PC-3 (cell line): ENCODE measurements at regions of chr1 and their contacts with region 1.

Region 1: DNA sequence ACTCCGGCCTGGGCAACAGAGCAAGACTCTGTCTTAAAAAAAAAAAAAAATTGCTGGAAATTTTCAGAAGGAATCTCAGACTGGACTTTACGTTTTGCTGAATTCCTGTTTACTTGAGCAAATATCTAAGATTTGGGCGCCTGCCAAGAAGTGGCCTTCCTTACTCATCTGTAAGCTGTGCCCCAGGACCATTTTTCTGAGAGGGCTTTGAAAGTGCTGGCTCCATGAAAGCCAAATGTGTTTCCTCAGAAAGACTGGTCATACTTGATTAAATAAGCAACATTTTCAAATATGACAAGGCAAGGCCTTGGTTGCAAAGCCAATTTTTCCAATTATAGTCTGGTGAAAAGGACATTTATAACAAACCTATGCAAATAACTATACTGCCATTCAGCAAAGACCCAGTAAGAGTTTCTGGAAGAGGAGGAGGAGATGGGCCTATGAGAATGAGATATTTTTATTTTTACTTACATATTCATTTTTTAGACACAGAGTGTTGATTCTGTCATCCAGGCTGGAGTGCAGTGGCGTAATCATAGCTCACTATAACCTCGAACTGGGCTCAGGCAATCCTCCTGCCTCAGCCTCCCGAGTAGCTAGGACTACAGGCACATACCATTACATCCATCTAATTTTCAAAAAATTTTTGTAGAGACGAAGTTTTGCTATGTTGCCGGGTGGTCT is 56.3 kb upstream of the HTR1D start:
- DNase-seq: peak; percentile 94
- ATAC-seq: peak; percentile 80
- H3K4me3 ChIP-seq: no peak overlapping the region
- H3K27ac ChIP-seq: peak overlapping the region; percentile 48
- H3K4me1 ChIP-seq: peaks cover 32% of the 10 kb centered on the region
- H3K27me3 ChIP-seq: no peaks in the 10 kb centered on the region
- CTCF ChIP-seq: no peak

Region 2: DNA sequence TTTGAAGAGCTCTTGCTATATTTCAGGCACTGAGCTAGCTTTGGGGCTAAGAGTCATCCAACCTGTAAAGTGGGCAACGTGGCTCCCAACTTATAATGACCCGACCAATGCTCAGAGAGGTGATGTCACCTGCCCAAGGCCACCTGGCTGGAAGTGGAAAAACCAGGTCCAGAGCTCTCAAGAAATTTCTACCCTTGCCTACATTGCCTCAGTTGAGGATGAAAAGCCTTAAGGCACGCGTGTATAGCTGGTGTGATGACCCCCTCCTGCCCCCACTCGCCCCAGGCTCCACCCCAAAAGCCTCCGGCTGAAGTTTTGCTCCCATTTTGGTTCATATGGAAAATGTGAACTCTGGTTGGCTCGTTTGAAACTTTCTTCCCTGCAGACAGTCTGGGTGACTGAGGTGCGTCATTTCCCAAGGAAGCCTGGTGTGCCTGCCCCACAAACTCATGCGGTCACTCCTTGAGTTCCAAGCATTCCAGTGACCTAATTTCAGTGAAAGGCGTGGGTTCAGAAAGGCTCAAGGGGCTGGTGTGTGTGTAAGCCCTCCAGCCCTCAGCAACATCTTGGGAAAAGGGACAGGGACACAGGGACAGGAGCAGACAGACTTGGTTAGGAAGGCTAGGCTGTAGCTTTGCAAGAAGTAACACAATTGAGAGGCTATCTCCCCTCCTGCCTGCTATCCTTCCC is 76.8 kb before region 1 on chr1:
- CTCF ChIA-PET with region 1: no interaction called
- POLR2A ChIA-PET with region 1: no interaction called
- intact Hi-C with region 1: loop called (anchors 5 kb)
- DNase-seq: peak; percentile 96
- ATAC-seq: peak; percentile 85
- H3K4me3 ChIP-seq: no peak overlapping the region
- H3K27ac ChIP-seq: peak overlapping the region; percentile 96
- H3K4me1 ChIP-seq: peaks cover 60% of the 10 kb centered on the region
- H3K27me3 ChIP-seq: no peaks in the 10 kb centered on the region
- CTCF ChIP-seq: no peak

Region 3: DNA sequence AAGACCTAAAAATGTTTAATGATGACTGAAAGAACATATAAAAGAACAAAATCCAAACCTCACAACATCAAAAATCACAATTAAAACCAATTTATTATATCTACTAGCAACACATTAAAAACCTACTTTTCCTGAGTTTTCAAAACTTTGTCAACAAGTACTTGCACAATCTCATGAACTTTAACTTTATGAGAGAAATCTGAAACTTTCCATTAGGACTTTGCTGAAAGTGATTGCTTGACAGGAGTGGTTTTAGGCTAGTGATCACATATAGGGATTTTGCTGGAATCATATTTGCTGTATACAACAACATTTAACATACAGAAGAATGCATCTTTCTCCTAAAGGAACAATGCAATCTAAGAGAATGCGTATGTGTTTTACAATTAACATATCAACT is 57.3 kb after region 1 on chr1:
- CTCF ChIA-PET with region 1: no interaction called
- POLR2A ChIA-PET with region 1: interaction called, 13 read pairs
- intact Hi-C with region 1: no loop called
- DNase-seq: no peak
- ATAC-seq: no peak
- H3K4me3 ChIP-seq: no peak overlapping the region
- H3K27ac ChIP-seq: no peak overlapping the region
- H3K4me1 ChIP-seq: peaks cover 18% of the 10 kb centered on the region
- H3K27me3 ChIP-seq: no peaks in the 10 kb centered on the region
- CTCF ChIP-seq: no peak